A549 (cell line): ENCODE measurements at regions of chr14 and their contacts with region 1.

Region 1: DNA sequence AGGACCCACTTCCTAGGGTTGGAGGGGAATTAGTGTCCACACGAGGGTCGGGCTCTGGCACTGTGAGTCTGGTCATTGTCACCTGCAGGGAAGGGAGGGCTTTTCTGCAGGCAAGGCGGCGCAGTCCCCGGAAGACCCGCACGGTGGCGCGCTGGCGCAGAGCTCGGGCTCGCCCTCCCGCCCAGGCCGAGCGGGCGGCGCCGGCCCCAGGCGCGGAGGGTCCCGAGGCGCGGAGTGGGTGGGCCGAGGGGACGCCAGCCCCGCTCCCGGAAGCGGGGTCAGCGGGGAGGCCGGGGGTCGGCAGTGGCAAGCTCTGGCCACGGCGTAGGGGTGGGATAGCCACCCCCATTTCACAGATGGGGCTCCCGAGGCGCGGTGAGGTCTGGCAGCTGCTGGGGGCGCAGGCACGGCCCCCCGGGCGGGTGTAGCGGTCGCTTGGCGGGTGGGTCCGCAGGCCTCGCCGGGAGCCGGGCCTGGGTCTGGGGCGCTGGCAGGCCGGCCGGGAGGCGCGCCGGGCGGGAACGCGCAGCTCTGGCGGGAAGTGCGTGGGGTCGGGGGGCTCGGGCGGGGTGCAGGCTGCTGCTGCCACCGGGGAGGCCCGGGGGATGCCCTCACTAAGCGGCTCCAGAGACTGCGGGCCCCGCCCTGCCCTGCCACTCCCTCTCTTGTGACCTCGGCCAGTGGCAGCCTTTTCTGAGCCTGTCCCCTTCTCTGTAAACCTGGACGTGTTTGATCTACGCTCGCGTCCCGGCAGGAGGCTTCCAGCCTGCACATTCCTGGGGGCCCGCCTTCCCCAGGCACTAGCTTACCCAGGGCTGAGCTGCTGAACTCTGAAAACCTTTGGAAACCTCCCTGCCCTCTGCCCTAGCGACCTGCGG is 46.1 kb downstream of the CYP46A1 start:
- DNase-seq: peak; percentile 65 to 77
- ATAC-seq: peak; percentile 62 to 79
- H3K4me3 ChIP-seq: peak overlapping the region; percentile 88
- H3K27ac ChIP-seq: peak overlapping the region; percentile 86 to 89
- H3K4me1 ChIP-seq: peaks cover 7% of the 10 kb centered on the region; the same call in 2 of the 3 replicates
- CTCF ChIP-seq: peak; percentile 91
- EP300 ChIP-seq: no peak
- POLR2A ChIP-seq: no peak; the same call in 1 of the 2 replicates
- RAD21 ChIP-seq: peak; percentile 81 to 92

Region 2: GRCh38 chr14:99706107-99706900 is 23.9 kb before region 1 on chr14:
- CTCF ChIA-PET with region 1: interaction called, 17 read pairs
- POLR2A ChIA-PET with region 1: no interaction called
- DNase-seq: no peak
- ATAC-seq: no peak
- H3K4me3 ChIP-seq: no peak overlapping the region
- H3K27ac ChIP-seq: no peak overlapping the region
- H3K4me1 ChIP-seq: no peaks in the 10 kb centered on the region
- CTCF ChIP-seq: no peak
- EP300 ChIP-seq: no peak
- POLR2A ChIP-seq: no peak
- RAD21 ChIP-seq: no peak

Region 3: DNA sequence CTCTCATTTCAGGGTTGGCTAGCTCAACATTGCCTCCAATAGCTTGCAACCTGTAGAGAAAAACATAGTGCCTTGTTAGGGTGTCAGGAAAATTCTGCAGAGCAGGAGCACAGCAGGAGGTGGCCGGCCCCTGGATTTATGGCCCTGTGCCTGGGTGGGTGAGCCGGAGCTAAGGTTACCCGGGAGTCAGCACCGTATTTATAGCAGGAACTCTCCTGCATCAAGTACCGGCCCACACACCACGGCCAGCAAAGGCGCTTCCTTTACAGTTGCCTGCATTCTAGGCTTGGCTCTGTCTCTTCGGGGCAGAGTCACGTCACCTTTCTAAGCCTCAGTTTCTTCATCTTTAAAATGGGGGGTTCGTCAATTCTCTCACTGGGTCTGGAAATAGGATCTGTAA is 10.2 kb after region 1 on chr14:
- CTCF ChIA-PET with region 1: interaction called, 263 read pairs
- POLR2A ChIA-PET with region 1: no interaction called
- DNase-seq: no peak
- ATAC-seq: no peak
- H3K4me3 ChIP-seq: no peak overlapping the region
- H3K27ac ChIP-seq: no peak overlapping the region
- H3K4me1 ChIP-seq: peaks cover 14% of the 10 kb centered on the region
- CTCF ChIP-seq: no peak
- EP300 ChIP-seq: no peak
- POLR2A ChIP-seq: no peak
- RAD21 ChIP-seq: no peak

Region 4: GRCh38 chr14:99774556-99775307 is 44.5 kb after region 1 on chr14:
- CTCF ChIA-PET with region 1: interaction called, 14 read pairs
- POLR2A ChIA-PET with region 1: no interaction called
- DNase-seq: no peak
- ATAC-seq: no peak
- H3K4me3 ChIP-seq: no peak overlapping the region
- H3K27ac ChIP-seq: no peak overlapping the region
- H3K4me1 ChIP-seq: no peaks in the 10 kb centered on the region; the same call in 2 of the 3 replicates
- CTCF ChIP-seq: no peak
- EP300 ChIP-seq: no peak
- POLR2A ChIP-seq: no peak
- RAD21 ChIP-seq: no peak

Region 5: GRCh38 chr14:99809360-99809759 is 79.1 kb after region 1 on chr14:
- CTCF ChIA-PET with region 1: interaction called, 23 read pairs
- POLR2A ChIA-PET with region 1: no interaction called
- DNase-seq: no peak
- ATAC-seq: no peak
- H3K4me3 ChIP-seq: no peak overlapping the region
- H3K27ac ChIP-seq: no peak overlapping the region
- H3K4me1 ChIP-seq: no peaks in the 10 kb centered on the region
- CTCF ChIP-seq: no peak
- EP300 ChIP-seq: no peak
- POLR2A ChIP-seq: no peak
- RAD21 ChIP-seq: no peak

Region 6: GRCh38 chr14:99884834-99885648 is 154.8 kb after region 1 on chr14:
- CTCF ChIA-PET with region 1: interaction called, 260 read pairs
- POLR2A ChIA-PET with region 1: no interaction called
- DNase-seq: peak; percentile 69 to 71
- ATAC-seq: peak; percentile 75 to 92; a peak in 4 of 6 replicates
- H3K4me3 ChIP-seq: no peak overlapping the region
- H3K27ac ChIP-seq: no peak overlapping the region
- H3K4me1 ChIP-seq: no peaks in the 10 kb centered on the region
- CTCF ChIP-seq: peak; percentile 95
- EP300 ChIP-seq: no peak
- POLR2A ChIP-seq: no peak
- RAD21 ChIP-seq: peak; percentile 91 to 94

Region 7: GRCh38 chr14:99946652-99947489 is 216.6 kb after region 1 on chr14:
- CTCF ChIA-PET with region 1: interaction called, 13 read pairs
- POLR2A ChIA-PET with region 1: no interaction called
- DNase-seq: peak in 1 of 2 experiments; percentile 76
- ATAC-seq: peak; percentile 75 to 89
- H3K4me3 ChIP-seq: no peak overlapping the region
- H3K27ac ChIP-seq: no peak overlapping the region
- H3K4me1 ChIP-seq: peaks cover 8% of the 10 kb centered on the region; the same call in 1 of the 3 replicates
- CTCF ChIP-seq: peak; percentile 81
- EP300 ChIP-seq: no peak
- POLR2A ChIP-seq: no peak
- RAD21 ChIP-seq: peak; percentile 47 to 54; a peak in 4 of 5 replicates

Region 8: GRCh38 chr14:100078991-100079725 is 348.9 kb after region 1 on chr14:
- CTCF ChIA-PET with region 1: no interaction called
- POLR2A ChIA-PET with region 1: no interaction called
- DNase-seq: no peak
- ATAC-seq: peak; percentile 38 to 63; a peak in 3 of 6 replicates
- H3K4me3 ChIP-seq: no peak overlapping the region
- H3K27ac ChIP-seq: 0 out of 6 replicates have a peak overlapping the region, but pooled peaks of 1 of the 2 experiments have one; percentile 15
- H3K4me1 ChIP-seq: no peaks in the 10 kb centered on the region
- CTCF ChIP-seq: no peak
- EP300 ChIP-seq: no peak
- POLR2A ChIP-seq: no peak
- RAD21 ChIP-seq: 0 out of 5 replicates have a peak, but pooled peaks have one; percentile 3 to 11